ENCODE measurements at regions of chr9 and their contacts with region 1.

Region 1: DNA sequence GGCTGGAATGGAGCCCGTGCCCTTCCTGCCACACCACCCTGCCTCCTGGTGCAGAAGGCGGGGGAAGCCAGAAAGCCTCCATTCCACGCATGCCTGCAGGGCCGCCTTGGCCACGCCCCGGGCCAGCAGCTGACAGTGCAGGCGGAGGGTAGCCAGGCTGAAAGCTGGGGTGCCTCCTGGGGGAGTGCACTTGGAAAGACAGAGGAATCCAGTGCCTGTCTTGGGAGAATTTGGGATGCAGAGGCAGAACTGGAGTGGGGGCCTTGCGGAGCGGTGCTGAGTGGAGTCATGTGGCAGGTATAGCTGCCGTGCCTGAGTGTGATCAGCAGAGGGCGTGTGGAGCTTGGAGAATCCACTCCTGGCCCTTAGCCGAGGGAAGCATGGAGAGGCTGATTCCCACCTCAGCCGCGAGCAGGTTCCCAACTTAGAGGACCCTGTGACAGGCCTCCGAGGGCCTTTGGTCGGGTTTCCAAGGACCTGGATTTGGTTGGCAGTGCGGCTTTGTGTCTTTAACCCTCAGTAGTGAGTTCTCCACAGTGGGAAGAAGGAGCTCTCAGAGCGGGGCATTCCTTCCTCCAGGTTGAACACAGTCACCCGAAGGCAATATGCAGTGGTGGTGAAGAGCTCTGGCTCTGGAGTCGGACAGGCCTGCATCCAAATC is 9.1 kb upstream of the URM1 start:
- DNase-seq: peak; percentile 86
- H3K4me3 Mint-ChIP-seq: peak overlapping the region; percentile 67
- H3K27ac Mint-ChIP-seq: peak overlapping the region; percentile 61
- H3K4me1 Mint-ChIP-seq: peaks cover 28% of the 10 kb centered on the region
- H3K27me3 Mint-ChIP-seq: no peaks in the 10 kb centered on the region

Region 2: GRCh38 chr9:128412120-128412790 is 50.1 kb after region 1 on chr9:
- CTCF ChIA-PET with region 1: interaction called, 24 read pairs
- intact Hi-C with region 1: loop called (anchors 1 kb)
- DNase-seq: peak; percentile 78
- H3K4me3 Mint-ChIP-seq: no peak overlapping the region
- H3K27ac Mint-ChIP-seq: no peak overlapping the region
- H3K4me1 Mint-ChIP-seq: no peaks in the 10 kb centered on the region
- H3K27me3 Mint-ChIP-seq: peaks cover 51% of the 10 kb centered on the region

Region 3: GRCh38 chr9:128420060-128420650 is 58.0 kb after region 1 on chr9:
- CTCF ChIA-PET with region 1: interaction called, 16 read pairs
- intact Hi-C with region 1: no loop called
- DNase-seq: peak; percentile 56
- H3K4me3 Mint-ChIP-seq: peak overlapping the region; percentile 67
- H3K27ac Mint-ChIP-seq: no peak overlapping the region
- H3K4me1 Mint-ChIP-seq: peaks cover 9% of the 10 kb centered on the region
- H3K27me3 Mint-ChIP-seq: peaks cover 32% of the 10 kb centered on the region

Region 4: DNA sequence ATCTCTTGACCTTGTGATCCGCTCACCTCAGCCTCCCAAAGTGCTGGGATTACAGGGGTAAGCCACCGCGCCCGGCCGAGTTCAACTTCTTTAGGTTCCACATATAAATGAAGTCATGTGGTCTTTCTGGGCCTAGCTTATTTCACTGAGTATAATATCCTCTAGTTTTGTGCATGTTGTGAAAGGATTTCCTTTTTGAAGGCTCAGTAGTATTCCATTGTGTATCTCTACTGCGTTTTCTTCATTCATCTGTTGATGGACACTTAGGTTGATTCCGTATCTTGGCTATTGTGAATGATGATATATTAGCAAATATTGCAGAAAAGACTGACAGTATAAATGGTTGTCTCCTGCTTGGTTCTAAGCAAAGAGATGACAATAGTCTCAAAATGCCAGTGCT is 113.8 kb after region 1 on chr9:
- CTCF ChIA-PET with region 1: no interaction called
- intact Hi-C with region 1: no loop called
- DNase-seq: no peak
- H3K4me3 Mint-ChIP-seq: no peak overlapping the region
- H3K27ac Mint-ChIP-seq: no peak overlapping the region
- H3K4me1 Mint-ChIP-seq: no peaks in the 10 kb centered on the region
- H3K27me3 Mint-ChIP-seq: no peaks in the 10 kb centered on the region

Measured in activated naive CD4-positive, alpha-beta T cell treated with anti-CD3 and anti-CD28 coated beads for 36 hours (primary cell).